CD14-positive monocyte (primary cell): ENCODE measurements at regions of chr6 and their contacts with region 1.

Region 1: GRCh38 chr6:111997078-111997852 is 56.6 kb upstream of the CCN6 start:
- DNase-seq: peak; percentile 74 to 86 (median 80)
- H3K4me3 ChIP-seq: no peak overlapping the region
- H3K4me3 Mint-ChIP-seq: peak overlapping the region in 1 of 2 donors; percentile 76
- H3K27ac ChIP-seq: no peak overlapping the region
- H3K27ac Mint-ChIP-seq: peak overlapping the region in 5 of 7 donors; percentile 31 to 65 (median 61)
- H3K4me1 ChIP-seq: peaks cover 21 to 29% of the 10 kb centered on the region in 2 donors
- H3K4me1 Mint-ChIP-seq: peaks cover 34% of the 10 kb centered on the region
- H3K27me3 ChIP-seq: no peaks in the 10 kb centered on the region
- H3K27me3 Mint-ChIP-seq: no peaks in the 10 kb centered on the region
- CTCF ChIP-seq: peak; percentile 89

Region 2: GRCh38 chr6:111804627-111805235 is 192.5 kb before region 1 on chr6:
- intact Hi-C with region 1: loop called in 1 of 2 experiments (anchors 2 kb)
- DNase-seq: peak; percentile 46 to 78 (median 59)
- H3K4me3 ChIP-seq: no peak overlapping the region
- H3K4me3 Mint-ChIP-seq: no peak overlapping the region
- H3K27ac ChIP-seq: peak overlapping the region in 1 of 2 donors; percentile 68
- H3K27ac Mint-ChIP-seq: peak overlapping the region in 6 of 7 donors; percentile 31 to 89 (median 72)
- H3K4me1 ChIP-seq: peaks cover 15 to 37% of the 10 kb centered on the region in 2 donors
- H3K4me1 Mint-ChIP-seq: peaks cover 43% of the 10 kb centered on the region
- H3K27me3 ChIP-seq: no peaks in the 10 kb centered on the region
- H3K27me3 Mint-ChIP-seq: peaks cover 0 to 2% (median 0%) of the 10 kb centered on the region in 3 donors
- CTCF ChIP-seq: peak; percentile 17

Region 3: DNA sequence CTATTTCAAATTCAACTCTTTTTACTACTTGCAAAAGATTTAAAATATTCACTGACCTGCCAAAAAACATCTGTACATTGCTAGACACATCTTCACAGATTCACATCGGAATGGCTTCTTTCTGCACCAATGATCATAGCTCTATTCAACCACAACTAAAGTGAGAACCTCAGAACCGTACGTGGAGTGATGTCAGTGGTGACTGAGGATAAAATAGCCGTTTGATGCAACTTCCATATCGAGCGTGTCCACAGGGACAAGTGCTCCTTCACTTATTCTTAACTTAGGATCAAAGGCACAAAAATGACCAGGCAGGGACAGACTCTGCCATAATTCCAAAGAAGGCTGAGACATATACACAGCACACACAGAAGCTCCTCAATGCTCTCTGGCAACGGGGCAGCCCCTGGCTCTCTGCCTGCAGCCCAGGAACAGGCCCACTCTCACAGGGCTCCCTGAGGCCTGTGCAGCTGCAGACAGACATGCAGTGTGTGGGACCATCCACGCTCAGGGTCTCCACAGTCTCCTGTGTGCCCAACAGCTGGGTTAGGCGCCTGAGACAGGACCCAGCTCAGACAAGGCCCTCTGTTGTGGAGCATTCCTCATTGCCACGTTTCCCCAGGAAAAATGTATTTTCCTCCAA is 146.8 kb before region 1 on chr6:
- intact Hi-C with region 1: no loop called
- DNase-seq: no peak
- H3K4me3 ChIP-seq: no peak overlapping the region
- H3K4me3 Mint-ChIP-seq: no peak overlapping the region
- H3K27ac ChIP-seq: no peak overlapping the region
- H3K27ac Mint-ChIP-seq: no peak overlapping the region
- H3K4me1 ChIP-seq: peaks cover 37 to 58% of the 10 kb centered on the region in 2 donors
- H3K4me1 Mint-ChIP-seq: peaks cover 48% of the 10 kb centered on the region
- H3K27me3 ChIP-seq: no peaks in the 10 kb centered on the region
- H3K27me3 Mint-ChIP-seq: no peaks in the 10 kb centered on the region
- CTCF ChIP-seq: no peak

Region 4: GRCh38 chr6:111873178-111874024 is 123.9 kb before region 1 on chr6 and contains the start of gene FYN:
- intact Hi-C with region 1: loop called (anchors 5 kb)
- DNase-seq: peak; percentile 95 to 97 (median 96)
- H3K4me3 ChIP-seq: peak within 1 kb of the TSS; percentile 65 to 95 (median 89)
- H3K4me3 Mint-ChIP-seq: peak within 1 kb of the TSS; percentile 93 to 95
- H3K27ac ChIP-seq: peak within 1 kb of the TSS; percentile 71 to 88
- H3K27ac Mint-ChIP-seq: peak within 1 kb of the TSS; percentile 84 to 95 (median 93)
- H3K4me1 ChIP-seq: peaks cover 32 to 48% of the 10 kb centered on the region in 2 donors
- H3K4me1 Mint-ChIP-seq: peaks cover 48% of the 10 kb centered on the region
- H3K27me3 ChIP-seq: no peaks in the 10 kb centered on the region
- H3K27me3 Mint-ChIP-seq: no peaks in the 10 kb centered on the region
- CTCF ChIP-seq: peak; percentile 40
- polyA plus RNA-seq, gene FYN: 88.4 to 149 (median 114) TPM

Region 5: GRCh38 chr6:111918825-111919224 is 78.4 kb before region 1 on chr6:
- intact Hi-C with region 1: loop called in 1 of 2 experiments (anchors 5 kb)
- DNase-seq: peak; percentile 38 to 54 (median 40)
- H3K4me3 ChIP-seq: peak overlapping the region in 1 of 3 experiments; percentile 19
- H3K4me3 Mint-ChIP-seq: peak overlapping the region; percentile 43 to 55
- H3K27ac ChIP-seq: peak overlapping the region in 1 of 2 donors; percentile 51
- H3K27ac Mint-ChIP-seq: peak overlapping the region in 6 of 7 donors; percentile 61 to 89 (median 76)
- H3K4me1 ChIP-seq: peaks cover 31 to 36% of the 10 kb centered on the region in 2 donors
- H3K4me1 Mint-ChIP-seq: peaks cover 37% of the 10 kb centered on the region
- H3K27me3 ChIP-seq: no peaks in the 10 kb centered on the region
- H3K27me3 Mint-ChIP-seq: peaks cover 0 to 2% (median 1%) of the 10 kb centered on the region in 3 donors
- CTCF ChIP-seq: no peak

Region 6: GRCh38 chr6:111939902-111940301 is 57.4 kb before region 1 on chr6:
- intact Hi-C with region 1: loop called (anchors 5 to 10 kb)
- DNase-seq: peak; percentile 55 to 82 (median 73)
- H3K4me3 ChIP-seq: peak overlapping the region in 1 of 3 experiments; percentile 6
- H3K4me3 Mint-ChIP-seq: peak overlapping the region; percentile 39 to 67
- H3K27ac ChIP-seq: peak overlapping the region; percentile 15 to 87
- H3K27ac Mint-ChIP-seq: peak overlapping the region; percentile 76 to 94 (median 87)
- H3K4me1 ChIP-seq: peaks cover 59 to 61% of the 10 kb centered on the region in 2 donors
- H3K4me1 Mint-ChIP-seq: peaks cover 61% of the 10 kb centered on the region
- H3K27me3 ChIP-seq: no peaks in the 10 kb centered on the region
- H3K27me3 Mint-ChIP-seq: peaks cover 0 to 2% (median 0%) of the 10 kb centered on the region in 3 donors
- CTCF ChIP-seq: no peak

Region 7: DNA sequence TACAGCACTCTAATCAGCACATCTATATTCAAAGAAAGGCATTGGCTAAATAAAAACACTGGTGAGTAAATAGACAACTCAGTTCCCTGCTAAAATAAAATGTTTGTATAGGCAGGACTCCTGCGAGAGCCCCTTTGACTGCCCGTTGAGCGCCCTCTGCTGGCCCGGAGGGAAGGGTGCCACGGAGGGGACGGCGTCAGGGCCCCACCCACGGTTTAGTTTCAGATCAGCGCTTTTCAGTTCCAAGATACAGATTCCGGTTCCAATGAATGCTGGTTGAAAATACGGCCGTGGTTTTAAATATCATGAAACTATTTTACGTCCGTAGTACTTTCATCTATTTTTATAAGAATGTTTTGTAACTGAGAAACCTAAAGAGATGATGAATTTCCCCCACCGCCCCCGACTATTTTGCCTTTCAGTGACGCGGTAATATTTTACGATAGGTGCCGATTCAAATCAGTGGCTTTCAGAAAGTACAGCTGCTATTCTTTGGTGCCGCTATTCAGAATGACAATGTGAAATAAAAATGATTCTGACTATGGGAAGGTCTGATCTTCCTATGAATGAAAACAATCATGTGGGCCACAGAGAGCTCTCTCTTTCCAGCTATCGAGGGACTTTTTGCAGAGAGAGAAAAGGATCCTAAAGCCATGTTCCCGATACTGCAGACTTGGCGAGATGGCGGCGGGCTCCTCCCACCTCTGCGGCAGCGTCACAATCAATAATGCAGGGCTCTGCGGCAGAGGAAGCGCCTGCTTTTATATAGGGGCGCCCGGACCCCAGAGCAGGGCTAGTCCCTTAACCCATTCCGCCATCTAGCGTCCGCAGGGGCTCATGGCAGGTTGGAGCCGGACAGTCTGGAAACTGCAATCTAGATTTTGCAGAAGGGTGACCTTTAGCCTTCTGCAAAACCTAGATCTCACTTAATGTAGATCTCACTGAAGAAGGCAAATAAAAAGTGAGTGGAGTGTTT is 46.1 kb after region 1 on chr6:
- intact Hi-C with region 1: loop called in 1 of 2 experiments (anchors 1 kb)
- DNase-seq: peak; percentile 76 to 83 (median 81)
- H3K4me3 ChIP-seq: peak overlapping the region; percentile 82 to 96 (median 92)
- H3K4me3 Mint-ChIP-seq: peak overlapping the region; percentile 85 to 95
- H3K27ac ChIP-seq: peak overlapping the region; percentile 46 to 90
- H3K27ac Mint-ChIP-seq: peak overlapping the region; percentile 87 to 94 (median 93)
- H3K4me1 ChIP-seq: peaks cover 3 to 7% of the 10 kb centered on the region in 2 donors
- H3K4me1 Mint-ChIP-seq: peaks cover 10% of the 10 kb centered on the region
- H3K27me3 ChIP-seq: no peaks in the 10 kb centered on the region
- H3K27me3 Mint-ChIP-seq: peaks cover 0 to 3% (median 0%) of the 10 kb centered on the region in 3 donors
- CTCF ChIP-seq: peak; percentile 92